ENCODE measurements at regions of chr22 and their contacts with region 1.

Region 1: GRCh38 chr22:30591588-30592359 is at the start of gene PES1:
- DNase-seq: peak; percentile 99
- ATAC-seq: peak; percentile 94
- H3K4me3 ChIP-seq: peak within 1 kb of the TSS; percentile 81 to 95 (median 91)
- H3K4me3 Mint-ChIP-seq: no peak within 1 kb of the TSS
- H3K27ac ChIP-seq: peak within 1 kb of the TSS; percentile 95 to 98
- H3K27ac Mint-ChIP-seq: no peak within 1 kb of the TSS
- H3K4me1 ChIP-seq: peaks cover 14 to 22% of the 10 kb centered on the region in 2 donors
- H3K4me1 Mint-ChIP-seq: no peaks in the 10 kb centered on the region
- H3K27me3 ChIP-seq: peaks cover 0 to 2% (median under 1%) of the 10 kb centered on the region in 4 experiments
- H3K27me3 Mint-ChIP-seq: peaks cover 3% of the 10 kb centered on the region
- CTCF ChIP-seq: no peak
- total RNA-seq, gene PES1: 72.7 and 75.2 TPM in 2 replicates

Region 2: DNA sequence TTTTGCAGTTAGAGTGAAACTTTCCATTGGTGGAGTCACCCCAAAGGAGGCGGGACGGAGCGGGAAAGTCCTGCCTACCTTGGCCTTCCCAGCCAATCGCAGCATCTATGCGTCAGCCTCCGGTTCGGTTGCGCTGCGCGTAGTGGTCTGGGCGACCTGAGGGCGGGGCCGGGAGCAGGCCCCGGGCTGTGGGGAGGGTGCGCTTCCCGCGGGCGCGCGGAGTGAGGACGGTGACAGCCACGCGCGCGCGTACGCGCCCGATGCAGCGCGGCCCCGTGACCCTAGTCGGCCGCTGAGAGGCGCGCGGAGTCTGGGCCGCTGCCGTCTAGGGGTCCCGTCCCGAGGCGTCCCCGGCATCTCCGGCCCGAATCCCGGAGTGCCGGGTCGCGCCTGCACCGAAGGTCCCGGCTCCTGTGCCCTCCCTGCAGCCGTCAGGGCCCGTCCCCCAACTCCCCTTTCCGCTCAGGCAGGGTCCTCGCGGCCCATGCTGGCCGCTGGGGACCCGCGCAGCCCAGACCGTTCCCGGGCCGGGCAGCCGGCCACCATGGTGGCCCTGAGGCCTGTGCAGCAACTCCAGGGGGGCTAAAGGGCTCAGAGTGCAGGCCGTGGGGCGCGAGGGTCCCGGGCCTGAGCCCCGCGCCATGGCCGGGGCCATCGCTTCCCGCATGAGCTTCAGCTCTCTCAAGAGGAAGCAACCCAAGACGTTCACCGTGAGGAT is 988.3 kb before region 1 on chr22 and contains the start of gene NF2:
- CTCF ChIA-PET with region 1: no interaction called
- POLR2A ChIA-PET with region 1: no interaction called
- intact Hi-C with region 1: loop called (anchors 5 kb)
- DNase-seq: peak; percentile 99
- ATAC-seq: peak; percentile 97
- H3K4me3 ChIP-seq: peak within 1 kb of the TSS; percentile 82 to 99 (median 95)
- H3K4me3 Mint-ChIP-seq: peak within 1 kb of the TSS; percentile 98
- H3K27ac ChIP-seq: peak within 1 kb of the TSS; percentile 81 to 92
- H3K27ac Mint-ChIP-seq: peak within 1 kb of the TSS; percentile 97
- H3K4me1 ChIP-seq: peaks cover 9 to 15% of the 10 kb centered on the region in 2 donors
- H3K4me1 Mint-ChIP-seq: peaks cover 20% of the 10 kb centered on the region
- H3K27me3 ChIP-seq: no peaks in the 10 kb centered on the region
- H3K27me3 Mint-ChIP-seq: no peaks in the 10 kb centered on the region
- CTCF ChIP-seq: no peak
- total RNA-seq, gene NF2: 26.6 and 27.7 TPM in 2 replicates

Region 3: GRCh38 chr22:30262917-30263741 is 328.6 kb before region 1 on chr22:
- CTCF ChIA-PET with region 1: no interaction called
- POLR2A ChIA-PET with region 1: no interaction called
- intact Hi-C with region 1: loop called (anchors 2 kb)
- DNase-seq: peak; percentile 86
- ATAC-seq: no peak
- H3K4me3 ChIP-seq: peak overlapping the region in 3 of 5 experiments; percentile 13 to 42 (median 27)
- H3K4me3 Mint-ChIP-seq: peak overlapping the region; percentile 67
- H3K27ac ChIP-seq: no peak overlapping the region
- H3K27ac Mint-ChIP-seq: peak overlapping the region; percentile 37
- H3K4me1 ChIP-seq: peaks cover 20 to 35% of the 10 kb centered on the region in 2 donors
- H3K4me1 Mint-ChIP-seq: peaks cover 31% of the 10 kb centered on the region
- H3K27me3 ChIP-seq: no peaks in the 10 kb centered on the region
- H3K27me3 Mint-ChIP-seq: no peaks in the 10 kb centered on the region
- CTCF ChIP-seq: peak; percentile 100

Region 4: GRCh38 chr22:30606455-30607299 is 14.9 kb after region 1 on chr22 and contains the start of gene TCN2:
- CTCF ChIA-PET with region 1: interaction called, 4 read pairs
- POLR2A ChIA-PET with region 1: interaction called, 9 read pairs
- intact Hi-C with region 1: loop called (anchors 1 kb)
- DNase-seq: peak; percentile 38
- ATAC-seq: peak; percentile 55
- H3K4me3 ChIP-seq: peak within 1 kb of the TSS; percentile 26 to 70 (median 59)
- H3K4me3 Mint-ChIP-seq: peak within 1 kb of the TSS; percentile 90
- H3K27ac ChIP-seq: no peak within 1 kb of the TSS
- H3K27ac Mint-ChIP-seq: peak within 1 kb of the TSS; percentile 64
- H3K4me1 ChIP-seq: peaks cover 18 to 42% of the 10 kb centered on the region in 2 donors
- H3K4me1 Mint-ChIP-seq: peaks cover 29% of the 10 kb centered on the region
- H3K27me3 ChIP-seq: no peaks in the 10 kb centered on the region
- H3K27me3 Mint-ChIP-seq: peaks cover 15% of the 10 kb centered on the region
- CTCF ChIP-seq: no peak
- total RNA-seq, gene TCN2: 0.19 and 0.37 TPM in 2 replicates

Region 5: DNA sequence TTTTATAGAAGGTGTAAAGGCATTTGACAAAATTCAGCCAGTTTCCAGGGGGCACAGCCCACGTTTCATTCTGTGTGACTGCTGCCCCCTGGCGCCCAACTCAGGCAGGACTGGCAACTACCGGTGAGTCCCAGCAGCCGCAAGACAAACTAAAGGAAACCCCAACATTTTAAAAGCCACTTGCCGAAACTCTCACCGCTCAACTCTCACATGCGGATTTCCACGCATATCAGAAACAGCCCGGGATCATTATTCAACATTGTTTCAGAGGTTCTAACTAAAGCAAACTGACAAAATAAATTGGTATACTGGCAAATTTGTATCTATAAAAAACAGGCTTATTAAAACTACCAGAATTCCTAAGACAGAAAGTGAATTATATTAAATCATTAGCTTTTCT is 328.6 kb after region 1 on chr22:
- CTCF ChIA-PET with region 1: interaction called, 3 read pairs
- POLR2A ChIA-PET with region 1: no interaction called
- intact Hi-C with region 1: loop called (anchors 5 kb)
- DNase-seq: peak; percentile 83
- ATAC-seq: peak; percentile 71
- H3K4me3 ChIP-seq: peak overlapping the region in 2 of 5 experiments; percentile 21 to 72
- H3K4me3 Mint-ChIP-seq: peak overlapping the region; percentile 33
- H3K27ac ChIP-seq: no peak overlapping the region
- H3K27ac Mint-ChIP-seq: no peak overlapping the region
- H3K4me1 ChIP-seq: peaks cover 9 to 14% of the 10 kb centered on the region in 2 donors
- H3K4me1 Mint-ChIP-seq: peaks cover 12% of the 10 kb centered on the region
- H3K27me3 ChIP-seq: peaks cover 0 to 6% (median under 1%) of the 10 kb centered on the region in 4 experiments
- H3K27me3 Mint-ChIP-seq: peaks cover 3% of the 10 kb centered on the region
- CTCF ChIP-seq: peak; percentile 99

Region 6: DNA sequence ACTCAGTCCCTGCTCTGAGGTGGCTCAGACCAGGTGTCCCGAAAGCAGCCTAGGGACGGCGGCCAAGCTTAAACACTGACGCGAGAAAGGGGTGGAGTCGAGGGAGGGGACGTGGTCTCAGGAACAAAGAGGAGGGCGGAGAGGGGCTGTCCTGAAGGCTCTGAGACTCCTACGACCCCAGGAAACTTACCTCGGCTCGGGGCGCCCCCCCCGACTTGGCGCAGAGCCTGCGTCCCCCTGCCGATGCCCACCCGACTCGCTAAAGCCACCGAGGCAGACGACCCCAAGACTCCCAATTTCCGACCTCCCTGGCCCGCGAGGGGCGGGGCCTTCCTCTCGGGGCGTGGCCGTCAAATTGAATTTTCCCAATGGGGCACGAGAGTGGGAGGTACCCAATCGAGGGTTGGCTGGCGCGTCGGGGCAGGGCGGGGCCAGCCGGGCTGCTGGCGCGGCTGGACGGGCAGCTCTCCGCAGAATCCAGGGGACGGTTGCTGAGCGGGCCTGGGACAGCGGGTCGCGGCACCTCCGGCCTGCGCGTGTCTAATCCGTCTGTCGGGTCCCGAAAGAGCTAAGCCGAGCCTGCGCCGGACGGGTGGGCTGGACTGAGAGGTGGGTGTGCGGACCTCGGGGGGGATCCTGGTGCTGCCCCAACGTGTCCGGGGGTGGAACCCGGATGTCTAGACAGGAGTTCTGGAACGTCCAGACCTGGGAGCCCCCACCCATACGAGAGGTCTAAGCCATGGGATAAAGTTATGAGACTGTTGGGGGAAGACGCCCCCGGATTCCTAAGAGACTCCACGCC is 489.3 kb after region 1 on chr22 and contains the start of gene SMTN:
- CTCF ChIA-PET with region 1: no interaction called
- POLR2A ChIA-PET with region 1: no interaction called
- intact Hi-C with region 1: loop called (anchors 2 kb)
- DNase-seq: peak; percentile 93
- ATAC-seq: peak; percentile 77
- H3K4me3 ChIP-seq: peak within 1 kb of the TSS; percentile 8 to 75 (median 67)
- H3K4me3 Mint-ChIP-seq: peak within 1 kb of the TSS; percentile 92
- H3K27ac ChIP-seq: no peak within 1 kb of the TSS
- H3K27ac Mint-ChIP-seq: peak within 1 kb of the TSS; percentile 58
- H3K4me1 ChIP-seq: peaks cover 22 to 50% of the 10 kb centered on the region in 2 donors
- H3K4me1 Mint-ChIP-seq: peaks cover 34% of the 10 kb centered on the region
- H3K27me3 ChIP-seq: no peaks in the 10 kb centered on the region
- H3K27me3 Mint-ChIP-seq: no peaks in the 10 kb centered on the region
- CTCF ChIP-seq: no peak
- total RNA-seq, gene SMTN: 4.0 and 4.7 TPM in 2 replicates

Region 7: GRCh38 chr22:32474635-32475467 is 1883.1 kb after region 1 on chr22 and contains the start of gene FBXO7:
- CTCF ChIA-PET with region 1: no interaction called
- POLR2A ChIA-PET with region 1: no interaction called
- intact Hi-C with region 1: loop called (anchors 5 kb)
- DNase-seq: peak; percentile 94
- ATAC-seq: peak; percentile 83
- H3K4me3 ChIP-seq: peak within 1 kb of the TSS; percentile 61 to 81 (median 72)
- H3K4me3 Mint-ChIP-seq: peak within 1 kb of the TSS; percentile 97
- H3K27ac ChIP-seq: peak within 1 kb of the TSS; percentile 86 to 98
- H3K27ac Mint-ChIP-seq: peak within 1 kb of the TSS; percentile 94
- H3K4me1 ChIP-seq: peaks cover 26 to 32% of the 10 kb centered on the region in 2 donors
- H3K4me1 Mint-ChIP-seq: peaks cover 32% of the 10 kb centered on the region
- H3K27me3 ChIP-seq: no peaks in the 10 kb centered on the region
- H3K27me3 Mint-ChIP-seq: no peaks in the 10 kb centered on the region
- CTCF ChIP-seq: peak; percentile 44
- total RNA-seq, gene FBXO7: 103 and 106 TPM in 2 replicates